GM12878 (cell line): ENCODE measurements at regions of chr18 and their contacts with region 1.

Region 1: DNA sequence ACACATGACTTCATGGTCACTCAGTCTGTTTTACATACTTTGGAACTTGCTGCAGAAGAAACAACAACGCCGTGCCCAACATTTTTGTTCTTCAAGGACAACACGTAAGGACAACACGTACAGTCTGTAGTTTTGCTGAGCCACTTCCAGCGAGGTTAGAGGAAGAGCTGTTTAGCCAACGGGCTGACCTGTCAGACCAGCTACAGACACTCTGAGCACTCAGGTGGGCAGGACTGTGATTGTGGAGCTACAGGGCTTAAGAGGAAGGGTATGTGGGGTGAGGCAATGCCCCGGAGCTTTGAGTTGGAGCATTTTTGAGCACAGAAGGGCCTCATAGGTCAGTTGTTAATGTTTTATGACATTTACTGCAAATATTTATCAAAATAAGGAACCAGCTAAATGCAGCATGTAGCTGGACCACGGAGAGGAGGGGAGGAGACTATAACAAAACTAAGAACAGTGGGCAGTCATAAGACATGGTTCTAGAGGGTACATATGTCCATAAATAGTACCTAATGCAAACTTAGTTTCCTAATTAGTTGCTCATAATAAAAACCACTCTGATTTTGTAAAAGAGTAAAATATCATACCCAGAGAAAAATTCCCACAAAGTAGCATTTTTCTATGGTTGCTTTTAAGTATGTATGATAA is 26.3 kb upstream of the NPC1 start:
- DNase-seq: peak; percentile 38
- ATAC-seq: peak; percentile 57
- H3K4me3 ChIP-seq: no peak overlapping the region
- H3K27ac ChIP-seq: no peak overlapping the region
- H3K4me1 ChIP-seq: peaks cover 5% of the 10 kb centered on the region
- H3K27me3 ChIP-seq: no peaks in the 10 kb centered on the region
- CTCF ChIP-seq: no peak
- EP300 ChIP-seq: no peak
- POLR2A ChIP-seq: no peak
- RAD21 ChIP-seq: no peak

Region 2: DNA sequence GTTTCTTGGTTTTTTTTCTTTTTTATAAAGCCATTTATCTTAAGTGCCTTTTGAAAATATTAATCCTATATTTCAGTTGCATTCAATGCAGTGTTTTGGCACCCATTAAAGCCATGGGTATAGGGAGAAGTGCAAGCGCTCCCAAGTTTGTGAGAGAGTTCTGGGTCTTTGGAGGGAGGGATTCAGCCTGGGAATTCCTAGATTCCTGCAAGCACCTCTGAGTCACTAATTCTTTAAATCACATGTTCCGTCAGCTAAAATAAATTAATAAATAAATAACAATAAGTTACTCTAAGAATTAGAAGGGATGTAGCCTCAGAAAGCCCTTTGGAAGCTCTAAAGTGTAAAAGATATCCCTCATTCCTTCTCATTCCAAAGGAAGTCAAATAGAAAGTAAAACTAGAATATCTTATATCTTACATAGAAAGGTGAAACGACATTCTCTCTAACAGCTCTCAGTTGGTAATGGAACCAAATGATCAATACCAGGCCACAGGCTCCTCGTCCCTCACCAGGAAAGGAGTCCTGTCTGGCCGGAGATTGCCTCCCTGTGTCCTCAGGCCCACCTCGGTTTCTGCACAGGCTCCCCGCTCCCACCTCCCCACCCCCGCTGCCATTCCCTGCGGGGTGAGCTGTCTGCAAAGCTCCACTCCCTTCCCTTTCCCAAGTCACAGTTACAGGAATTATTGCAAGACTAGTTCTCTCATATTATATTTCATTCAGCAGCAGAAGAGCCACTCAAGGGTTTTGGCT is 901.8 kb before region 1 on chr18:
- CTCF ChIA-PET with region 1: no interaction called
- POLR2A ChIA-PET with region 1: no interaction called
- RAD21 ChIA-PET with region 1: no interaction called
- SMC1A ChIA-PET with region 1: no interaction called
- in situ Hi-C with region 1: no loop called
- intact Hi-C with region 1: no loop called
- DNase-seq: no peak
- ATAC-seq: no peak
- H3K4me3 ChIP-seq: no peak overlapping the region
- H3K27ac ChIP-seq: no peak overlapping the region
- H3K4me1 ChIP-seq: no peaks in the 10 kb centered on the region
- H3K27me3 ChIP-seq: no peaks in the 10 kb centered on the region; a peak in 1 of 4 replicates
- CTCF ChIP-seq: no peak
- EP300 ChIP-seq: no peak
- POLR2A ChIP-seq: no peak
- RAD21 ChIP-seq: no peak

Region 3: DNA sequence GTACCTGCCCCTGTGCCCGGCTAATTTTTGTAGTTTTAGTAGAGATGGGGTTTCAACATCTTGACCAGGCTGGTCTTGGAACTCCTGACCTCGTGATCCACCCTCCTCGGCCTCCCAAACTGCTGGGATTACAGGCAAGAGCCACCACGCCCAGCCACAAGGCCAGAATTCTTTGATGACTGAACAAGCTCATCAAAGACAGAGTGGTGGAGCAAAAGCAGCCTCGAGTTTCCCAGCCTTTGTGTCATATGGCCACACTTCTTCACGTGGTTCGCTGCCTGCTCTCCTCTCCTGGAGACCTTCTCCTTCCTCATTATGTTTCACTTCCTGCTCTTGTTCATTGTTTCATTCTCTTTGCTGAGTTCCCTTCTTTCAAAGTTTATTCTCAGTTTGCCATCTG is 16.4 kb before region 1 on chr18:
- CTCF ChIA-PET with region 1: interaction called, 6 read pairs
- POLR2A ChIA-PET with region 1: interaction called, 3 read pairs
- RAD21 ChIA-PET with region 1: interaction called, 4 read pairs
- SMC1A ChIA-PET with region 1: interaction called, 23 read pairs
- in situ Hi-C with region 1: no loop called
- intact Hi-C with region 1: no loop called
- DNase-seq: no peak
- ATAC-seq: no peak
- H3K4me3 ChIP-seq: no peak overlapping the region
- H3K27ac ChIP-seq: no peak overlapping the region
- H3K4me1 ChIP-seq: no peaks in the 10 kb centered on the region
- H3K27me3 ChIP-seq: no peaks in the 10 kb centered on the region
- CTCF ChIP-seq: no peak
- EP300 ChIP-seq: no peak
- POLR2A ChIP-seq: no peak
- RAD21 ChIP-seq: no peak

Region 4: DNA sequence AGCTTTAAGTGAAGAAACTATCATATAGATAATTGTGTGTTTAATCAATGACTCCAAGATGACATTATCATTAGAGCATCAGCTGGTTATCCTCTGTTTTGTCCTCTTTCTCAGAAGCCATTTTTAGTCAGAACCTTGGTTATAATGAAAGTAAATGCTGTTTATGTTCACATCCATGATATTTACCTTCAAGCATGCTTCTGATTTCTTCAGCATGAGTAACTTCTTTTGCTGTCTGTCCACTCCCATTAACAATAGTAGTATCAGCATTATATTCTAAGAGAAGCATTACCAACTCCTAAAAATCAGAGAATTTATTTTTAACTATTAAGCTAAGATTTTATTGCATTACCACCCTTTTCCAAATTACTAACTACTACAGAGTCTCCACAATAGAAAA is 728.8 kb after region 1 on chr18:
- CTCF ChIA-PET with region 1: no interaction called
- POLR2A ChIA-PET with region 1: no interaction called
- RAD21 ChIA-PET with region 1: no interaction called
- SMC1A ChIA-PET with region 1: no interaction called
- in situ Hi-C with region 1: no loop called
- intact Hi-C with region 1: no loop called
- DNase-seq: no peak
- ATAC-seq: no peak
- H3K4me3 ChIP-seq: no peak overlapping the region
- H3K27ac ChIP-seq: no peak overlapping the region
- H3K4me1 ChIP-seq: no peaks in the 10 kb centered on the region
- H3K27me3 ChIP-seq: peaks cover 0 to 2% of the 10 kb centered on the region in 2 experiments; a peak in 1 of 4 replicates
- CTCF ChIP-seq: no peak
- EP300 ChIP-seq: no peak
- POLR2A ChIP-seq: no peak
- RAD21 ChIP-seq: no peak